Activated CD4-positive, alpha-beta memory T cell treated with anti-CD3 and anti-CD28 coated beads, Interleukin-2, amount 10 ng/mL, durations not matched to agents 7 days and 5 days (primary cell): ENCODE measurements at regions of chr18 and their contacts with region 1.

Region 1: GRCh38 chr18:26370037-26370436 is 143.8 kb downstream of the TAF4B start:
- DNase-seq: no peak
- H3K4me3 Mint-ChIP-seq: no peak overlapping the region
- H3K27ac Mint-ChIP-seq: no peak overlapping the region
- H3K4me1 Mint-ChIP-seq: no peaks in the 10 kb centered on the region
- H3K27me3 Mint-ChIP-seq: no peaks in the 10 kb centered on the region

Region 2: DNA sequence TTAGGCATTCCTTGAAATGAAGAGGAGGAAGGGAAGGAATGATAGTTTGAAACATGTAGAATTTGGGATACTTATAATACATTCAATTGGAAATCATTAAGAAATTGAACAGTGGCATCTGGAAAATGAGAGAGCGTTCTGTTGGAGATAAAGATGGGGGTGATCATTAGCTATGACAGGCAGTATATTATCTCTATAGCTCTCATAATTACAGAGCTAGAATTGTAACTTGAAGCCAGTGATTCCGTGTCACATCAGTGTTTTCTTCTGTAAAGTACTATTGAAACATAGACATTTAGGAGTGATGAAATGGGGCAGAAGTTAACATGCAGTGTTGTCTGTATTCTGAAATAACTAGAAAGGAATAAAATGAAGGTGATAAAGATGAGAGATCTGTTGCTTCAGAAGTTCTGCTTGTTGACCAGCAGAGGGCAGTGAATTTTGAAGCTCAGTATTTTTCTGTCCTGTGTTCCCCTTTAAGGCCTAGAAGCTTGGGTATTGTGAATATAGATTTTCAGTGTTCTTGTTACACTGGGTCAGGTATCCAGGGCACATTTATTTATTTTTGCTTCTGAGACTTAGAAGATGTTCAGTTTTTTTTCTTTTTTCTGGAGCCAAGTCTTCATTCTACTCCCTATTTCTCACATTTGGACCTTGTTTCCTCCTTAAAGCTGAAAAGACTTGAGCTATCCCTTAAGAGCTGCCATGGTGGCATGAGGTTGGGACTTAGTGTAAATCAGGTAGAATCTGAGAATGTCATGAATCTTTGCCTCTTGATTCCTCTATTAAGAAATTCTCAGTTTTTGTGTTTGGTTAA is 13.6 kb after region 1 on chr18:
- CTCF ChIA-PET with region 1: interaction called, 14 read pairs
- POLR2A ChIA-PET with region 1: no interaction called
- DNase-seq: no peak
- H3K4me3 Mint-ChIP-seq: no peak overlapping the region
- H3K27ac Mint-ChIP-seq: no peak overlapping the region
- H3K4me1 Mint-ChIP-seq: no peaks in the 10 kb centered on the region
- H3K27me3 Mint-ChIP-seq: no peaks in the 10 kb centered on the region

Region 3: DNA sequence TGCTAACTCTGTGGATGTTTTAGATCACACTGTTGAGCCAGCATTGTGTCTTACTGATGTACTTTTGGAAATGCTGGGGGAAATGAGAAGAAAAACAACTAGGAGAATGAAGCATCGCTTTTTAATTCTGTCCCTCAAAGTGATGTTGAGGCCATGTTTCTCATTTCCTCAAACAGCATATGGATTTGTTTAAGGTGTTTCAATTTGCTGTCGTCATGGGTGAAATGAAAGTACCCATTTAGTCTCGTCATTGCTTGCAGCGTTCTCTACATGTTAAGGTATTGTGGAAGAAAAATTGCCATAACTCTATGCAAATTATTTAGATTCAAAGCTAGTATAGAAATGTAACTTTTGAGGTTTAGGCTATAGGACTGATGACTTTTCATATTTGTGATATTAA is 27.0 kb after region 1 on chr18:
- CTCF ChIA-PET with region 1: no interaction called
- POLR2A ChIA-PET with region 1: no interaction called
- DNase-seq: no peak
- H3K4me3 Mint-ChIP-seq: no peak overlapping the region
- H3K27ac Mint-ChIP-seq: no peak overlapping the region
- H3K4me1 Mint-ChIP-seq: no peaks in the 10 kb centered on the region
- H3K27me3 Mint-ChIP-seq: no peaks in the 10 kb centered on the region